ENCODE measurements at regions of chr7 and their contacts with region 1.

Region 1: DNA sequence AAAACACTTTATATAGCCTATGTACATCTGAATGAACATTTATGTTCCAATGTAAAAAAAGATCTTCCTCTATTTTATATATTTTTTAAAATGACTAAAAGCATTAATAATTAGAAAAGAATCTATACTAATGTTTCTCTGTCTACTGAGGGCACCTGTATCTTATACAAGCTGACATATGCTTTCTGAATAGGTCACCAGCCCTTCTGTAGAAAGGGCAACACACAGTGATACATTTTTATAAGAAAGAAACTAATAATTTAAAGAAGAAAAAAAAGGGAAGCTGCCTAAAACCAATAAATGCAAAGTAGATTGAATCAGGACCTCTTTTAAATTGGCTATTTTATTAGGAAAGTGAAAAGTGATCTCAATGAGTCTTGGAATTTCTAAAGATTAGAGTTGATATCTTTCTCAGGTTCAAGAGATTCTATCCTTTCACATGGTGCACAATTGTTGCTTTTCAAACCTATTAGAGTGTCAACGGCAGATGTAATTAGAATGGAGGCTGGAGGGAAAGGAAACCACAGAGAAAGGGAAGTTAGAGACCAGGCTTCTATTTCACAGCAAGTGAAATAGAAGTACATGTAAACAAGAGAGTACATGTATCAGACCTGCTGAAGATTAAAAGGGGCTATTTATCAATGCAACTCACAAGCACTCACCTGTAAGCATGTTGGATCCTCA is 6.3 kb downstream of the MTPN start:
- DNase-seq: no peak
- ATAC-seq: no peak
- H3K4me3 ChIP-seq: no peak overlapping the region
- H3K27ac ChIP-seq: no peak overlapping the region
- H3K4me1 ChIP-seq: peaks cover 11% of the 10 kb centered on the region
- H3K27me3 ChIP-seq: no peaks in the 10 kb centered on the region
- CTCF ChIP-seq: no peak

Region 2: GRCh38 chr7:135911099-135911498 is 59.7 kb before region 1 on chr7:
- CTCF ChIA-PET with region 1: no interaction called
- POLR2A ChIA-PET with region 1: interaction called, 13 read pairs
- in situ Hi-C with region 1: no loop called
- intact Hi-C with region 1: no loop called
- DNase-seq: no peak
- ATAC-seq: no peak
- H3K4me3 ChIP-seq: no peak overlapping the region
- H3K27ac ChIP-seq: no peak overlapping the region
- H3K4me1 ChIP-seq: no peaks in the 10 kb centered on the region
- H3K27me3 ChIP-seq: no peaks in the 10 kb centered on the region
- CTCF ChIP-seq: no peak

Measured in Panc1 (cell line).